ENCODE measurements at regions of chr3 and their contacts with region 1.

Region 1: GRCh38 chr3:5057857-5058324 is 64.2 kb upstream of the ARL8B start:
- DNase-seq: peak; percentile 88
- H3K4me3 ChIP-seq: no peak overlapping the region
- H3K27ac ChIP-seq: peak overlapping the region in 1 of 4 donors; percentile 37
- H3K4me1 ChIP-seq: peaks cover 0 to 15% (median 6%) of the 10 kb centered on the region in 4 donors
- H3K27me3 ChIP-seq: no peaks in the 10 kb centered on the region
- CTCF ChIP-seq: peak; percentile 56 to 74 (median 68)
- EP300 ChIP-seq: no peak
- POLR2A ChIP-seq: no peak

Region 2: DNA sequence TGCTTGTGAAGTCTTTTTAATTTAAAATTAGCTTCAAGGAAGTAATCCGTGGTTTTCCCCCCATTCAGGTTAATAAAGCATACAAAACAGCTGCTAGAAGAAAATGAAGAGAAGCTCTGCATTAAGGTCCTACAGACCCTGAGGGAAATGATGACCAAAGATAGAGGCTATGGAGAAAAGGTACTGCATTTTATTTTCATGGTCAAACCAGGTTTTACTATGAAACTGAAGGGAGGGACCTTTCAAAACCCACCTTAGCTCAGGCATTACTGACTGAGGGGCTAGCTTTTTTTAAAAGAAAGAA is 346.2 kb before region 1 on chr3:
- intact Hi-C with region 1: loop called (anchors 2 kb)
- DNase-seq: no peak
- H3K4me3 ChIP-seq: no peak overlapping the region
- H3K27ac ChIP-seq: peak overlapping the region in 2 of 4 donors; percentile 5 to 6
- H3K4me1 ChIP-seq: no peaks in the 10 kb centered on the region
- H3K27me3 ChIP-seq: no peaks in the 10 kb centered on the region
- CTCF ChIP-seq: no peak
- EP300 ChIP-seq: no peak
- POLR2A ChIP-seq: no peak

Region 3: GRCh38 chr3:5898106-5898505 is 840.2 kb after region 1 on chr3:
- intact Hi-C with region 1: no loop called
- DNase-seq: no peak
- H3K4me3 ChIP-seq: no peak overlapping the region
- H3K27ac ChIP-seq: no peak overlapping the region
- H3K4me1 ChIP-seq: no peaks in the 10 kb centered on the region
- H3K27me3 ChIP-seq: no peaks in the 10 kb centered on the region
- CTCF ChIP-seq: no peak
- EP300 ChIP-seq: no peak
- POLR2A ChIP-seq: no peak

Measured in sigmoid colon (tissue), 7 donors.